ENCODE measurements at regions of chr18 and their contacts with region 1.

Region 1: DNA sequence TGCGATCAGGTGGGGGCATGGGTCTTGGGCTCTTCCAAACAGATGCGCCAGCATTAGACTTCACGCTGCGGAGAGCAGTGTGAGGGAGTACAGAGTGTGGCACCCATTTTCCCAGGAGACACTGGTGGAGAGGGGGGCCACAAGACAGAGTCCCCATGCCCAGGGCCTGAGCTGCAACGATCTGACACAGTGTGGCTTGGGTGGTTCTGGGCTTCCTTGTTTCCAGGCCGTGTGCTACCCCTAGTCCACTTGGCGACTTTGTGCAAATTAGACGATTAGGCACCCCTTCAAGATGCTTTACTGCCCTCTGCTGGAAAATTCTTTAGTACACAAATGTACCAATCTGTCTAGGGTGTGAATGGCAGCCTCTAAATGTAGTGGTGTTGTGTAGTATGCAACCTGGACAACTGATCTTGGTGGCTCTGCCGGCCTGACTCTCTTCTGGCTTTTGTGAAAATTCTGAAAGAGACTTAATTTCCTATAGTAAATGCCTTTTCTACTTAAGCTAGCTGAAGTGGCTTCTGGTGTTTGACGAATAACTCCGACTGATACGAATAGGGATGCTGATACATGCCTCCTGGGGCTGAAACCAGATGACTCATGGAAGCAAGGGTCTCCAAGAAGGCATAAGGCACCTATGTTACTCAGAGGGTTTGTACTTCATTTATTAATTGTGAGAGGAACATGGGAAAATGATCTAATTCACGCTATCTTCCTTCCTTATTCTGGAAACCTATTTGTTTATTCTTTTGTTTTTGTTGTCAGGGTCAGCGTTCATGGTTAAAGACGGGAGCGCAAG is 92.3 kb upstream of the SMAD2 start:
- DNase-seq: peak in 1 of 2 experiments; percentile 50
- H3K4me3 ChIP-seq: no peak overlapping the region
- H3K4me3 Mint-ChIP-seq: no peak overlapping the region
- H3K27ac Mint-ChIP-seq: no peak overlapping the region
- H3K4me1 ChIP-seq: no peaks in the 10 kb centered on the region
- H3K4me1 Mint-ChIP-seq: no peaks in the 10 kb centered on the region
- H3K27me3 ChIP-seq: no peaks in the 10 kb centered on the region
- H3K27me3 Mint-ChIP-seq: peaks cover 3% of the 10 kb centered on the region
- CTCF ChIP-seq: peak; percentile 33 to 38

Region 2: GRCh38 chr18:47772374-47773248 is 250.1 kb before region 1 on chr18:
- CTCF ChIA-PET with region 1: no interaction called
- POLR2A ChIA-PET with region 1: no interaction called
- intact Hi-C with region 1: loop called (anchors 1 kb)
- DNase-seq: peak; percentile 38 to 58
- H3K4me3 ChIP-seq: no peak overlapping the region
- H3K4me3 Mint-ChIP-seq: no peak overlapping the region
- H3K27ac Mint-ChIP-seq: no peak overlapping the region
- H3K4me1 ChIP-seq: no peaks in the 10 kb centered on the region
- H3K4me1 Mint-ChIP-seq: no peaks in the 10 kb centered on the region
- H3K27me3 ChIP-seq: no peaks in the 10 kb centered on the region
- H3K27me3 Mint-ChIP-seq: peaks cover 4% of the 10 kb centered on the region
- CTCF ChIP-seq: peak; percentile 39 to 52

Region 3: GRCh38 chr18:47865183-47865582 is 157.5 kb before region 1 on chr18:
- CTCF ChIA-PET with region 1: no interaction called
- POLR2A ChIA-PET with region 1: no interaction called
- intact Hi-C with region 1: loop called (anchors 2 kb)
- DNase-seq: no peak
- H3K4me3 ChIP-seq: no peak overlapping the region
- H3K4me3 Mint-ChIP-seq: no peak overlapping the region
- H3K27ac Mint-ChIP-seq: no peak overlapping the region
- H3K4me1 ChIP-seq: no peaks in the 10 kb centered on the region
- H3K4me1 Mint-ChIP-seq: no peaks in the 10 kb centered on the region
- H3K27me3 ChIP-seq: no peaks in the 10 kb centered on the region
- H3K27me3 Mint-ChIP-seq: no peaks in the 10 kb centered on the region
- CTCF ChIP-seq: no peak

Region 4: GRCh38 chr18:47931718-47932103 is 91.0 kb before region 1 on chr18:
- CTCF ChIA-PET with region 1: no interaction called
- POLR2A ChIA-PET with region 1: no interaction called
- intact Hi-C with region 1: loop called (anchors 1 kb)
- DNase-seq: peak; percentile 32 to 50
- H3K4me3 ChIP-seq: peak overlapping the region; percentile 75
- H3K4me3 Mint-ChIP-seq: peak overlapping the region; percentile 72
- H3K27ac Mint-ChIP-seq: peak overlapping the region; percentile 73
- H3K4me1 ChIP-seq: 0 out of 2 replicates have a peak, but pooled peaks cover 8% of the 10 kb centered on the region
- H3K4me1 Mint-ChIP-seq: no peaks in the 10 kb centered on the region
- H3K27me3 ChIP-seq: no peaks in the 10 kb centered on the region
- H3K27me3 Mint-ChIP-seq: peaks cover 3% of the 10 kb centered on the region
- CTCF ChIP-seq: peak in 1 of 2 experiments; percentile 23

Region 5: DNA sequence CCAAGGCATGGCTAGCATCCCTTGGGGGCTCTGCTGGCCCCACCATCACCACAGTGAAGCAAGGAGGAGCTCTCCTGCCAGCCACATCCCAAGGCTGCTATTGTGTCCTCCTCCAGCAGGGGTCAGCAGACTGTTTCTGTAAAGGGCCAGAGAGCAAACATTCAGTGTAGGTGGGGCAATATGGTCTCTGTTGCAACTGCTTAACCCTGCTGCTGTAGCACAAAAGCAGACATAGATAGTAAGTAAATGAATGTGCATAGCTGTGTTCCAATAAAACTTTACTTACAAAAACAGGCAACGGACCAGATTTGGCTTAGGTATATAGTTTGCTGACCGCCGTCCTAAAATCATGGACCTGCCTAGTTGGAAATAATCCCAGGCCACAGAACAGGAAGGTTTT is 422.8 kb after region 1 on chr18:
- CTCF ChIA-PET with region 1: no interaction called
- POLR2A ChIA-PET with region 1: no interaction called
- intact Hi-C with region 1: loop called (anchors 1 kb)
- DNase-seq: peak; percentile 71 to 79
- H3K4me3 ChIP-seq: no peak overlapping the region
- H3K4me3 Mint-ChIP-seq: no peak overlapping the region
- H3K27ac Mint-ChIP-seq: no peak overlapping the region
- H3K4me1 ChIP-seq: no peaks in the 10 kb centered on the region
- H3K4me1 Mint-ChIP-seq: no peaks in the 10 kb centered on the region
- H3K27me3 ChIP-seq: no peaks in the 10 kb centered on the region
- H3K27me3 Mint-ChIP-seq: peaks cover 2% of the 10 kb centered on the region
- CTCF ChIP-seq: peak; percentile 60 to 66

Measured in Caco-2 (cell line).